ENCODE measurements at regions of chr14 and their contacts with region 1.

Region 1: DNA sequence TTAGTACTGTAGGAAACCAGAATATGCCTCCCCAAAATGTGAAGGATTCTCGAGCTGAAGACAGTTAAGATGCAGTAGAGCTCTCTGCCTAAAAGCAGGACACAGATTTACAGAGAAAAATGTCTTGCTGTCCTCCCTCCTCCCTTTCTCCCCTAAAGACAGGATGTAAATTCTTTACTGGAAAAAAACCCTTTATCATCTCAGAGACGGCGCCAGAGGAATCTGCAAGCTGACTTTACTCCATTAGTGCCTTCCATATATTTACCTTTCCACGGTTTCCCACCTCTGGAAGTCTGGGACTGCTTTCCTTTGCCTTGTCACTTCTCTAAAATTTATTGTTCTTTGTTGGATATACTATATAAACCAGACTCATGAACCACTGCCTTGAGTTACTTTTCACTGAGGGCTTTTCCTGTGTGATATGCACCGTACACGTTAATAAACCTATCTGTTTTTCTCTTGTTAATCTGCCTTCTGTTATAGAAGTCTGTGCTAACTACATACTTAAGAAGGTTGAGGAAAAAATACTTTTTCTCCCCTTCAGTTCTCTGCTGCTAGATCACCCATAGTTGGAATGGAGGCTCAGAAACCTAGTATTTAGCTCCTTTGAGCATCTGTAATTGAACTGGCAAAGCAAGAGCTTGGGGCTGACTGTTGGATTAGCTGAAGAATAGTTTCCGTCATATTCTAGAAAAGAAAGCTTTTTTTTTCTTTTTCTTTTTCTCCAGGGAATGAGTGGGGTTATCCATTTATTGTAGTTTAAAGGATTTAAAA is 99.9 kb downstream of the RAD51B start:
- DNase-seq: no peak
- H3K4me3 ChIP-seq: no peak overlapping the region
- CTCF ChIP-seq: no peak

Region 2: DNA sequence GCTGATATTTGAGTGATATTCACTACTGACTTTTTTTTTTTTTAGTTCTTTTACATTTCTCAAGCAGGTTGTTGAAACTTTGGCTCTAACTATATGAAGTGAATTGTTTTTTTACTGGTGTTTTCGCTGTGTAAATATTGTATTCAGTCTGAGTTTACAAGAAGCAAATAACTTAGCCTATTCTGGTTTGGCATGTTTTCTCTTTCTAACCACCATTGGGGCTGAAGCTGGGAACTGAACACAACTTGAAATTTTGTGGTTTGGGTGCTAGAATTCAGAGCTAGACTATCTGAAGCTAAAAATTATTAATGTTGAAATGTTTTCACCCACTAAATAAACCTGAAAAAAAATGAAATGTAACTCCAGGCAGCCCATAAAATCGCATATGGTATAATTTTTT is 62.6 kb before region 1 on chr14:
- in situ Hi-C with region 1: no loop called
- DNase-seq: peak; percentile 82
- H3K4me3 ChIP-seq: no peak overlapping the region
- CTCF ChIP-seq: no peak

Region 3: GRCh38 chr14:67875175-67876006 is 44.1 kb before region 1 on chr14:
- in situ Hi-C with region 1: loop called (anchors 5 kb)
- DNase-seq: no peak
- H3K4me3 ChIP-seq: no peak overlapping the region
- CTCF ChIP-seq: no peak

Measured in astrocyte of the cerebellum (primary cell).